PC-9 (cell line): ENCODE measurements at regions of chr12 and their contacts with region 1.

Region 1: GRCh38 chr12:12872139-12872881 is 19.1 kb upstream of the GPRC5A start:
- DNase-seq: peak; percentile 96 to 100
- H3K4me3 ChIP-seq: no peak overlapping the region
- H3K27ac ChIP-seq: peak overlapping the region; percentile 97
- H3K4me1 ChIP-seq: peaks cover 65% of the 10 kb centered on the region
- H3K27me3 ChIP-seq: no peaks in the 10 kb centered on the region
- CTCF ChIP-seq: no peak

Region 2: DNA sequence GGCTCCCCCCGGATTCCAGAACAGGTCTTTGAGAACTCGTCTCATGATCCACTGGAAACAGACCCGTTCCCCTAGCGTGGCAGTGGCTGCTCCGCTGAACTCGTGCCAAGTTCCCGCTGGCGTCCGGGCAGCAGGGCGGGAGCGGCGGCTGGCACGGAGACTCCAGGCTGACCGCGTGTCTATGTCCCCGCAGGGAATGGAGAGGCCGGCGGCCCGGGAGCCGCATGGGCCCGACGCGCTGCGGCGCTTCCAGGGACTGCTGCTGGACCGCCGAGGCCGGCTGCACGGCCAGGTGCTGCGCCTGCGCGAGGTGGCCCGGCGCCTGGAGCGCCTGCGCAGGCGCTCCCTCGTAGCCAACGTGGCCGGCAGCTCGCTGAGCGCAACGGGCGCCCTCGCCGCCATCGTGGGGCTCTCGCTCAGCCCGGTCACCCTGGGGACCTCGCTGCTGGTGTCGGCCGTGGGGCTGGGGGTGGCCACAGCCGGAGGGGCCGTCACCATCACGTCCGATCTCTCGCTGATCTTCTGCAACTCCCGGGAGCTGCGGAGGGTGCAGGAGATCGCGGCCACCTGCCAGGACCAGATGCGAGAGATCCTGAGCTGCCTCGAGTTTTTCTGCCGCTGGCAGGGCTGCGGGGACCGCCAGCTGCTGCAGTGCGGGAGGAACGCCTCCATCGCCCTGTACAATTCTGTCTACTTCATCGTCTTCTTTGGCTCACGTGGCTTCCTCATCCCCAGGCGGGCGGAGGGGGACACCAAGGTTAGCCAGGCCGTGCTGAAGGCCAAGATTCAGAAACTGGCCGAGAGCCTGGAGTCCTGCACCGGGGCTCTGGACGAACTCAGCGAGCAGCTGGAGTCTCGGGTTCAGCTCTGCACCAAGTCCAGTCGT is 85.4 kb before region 1 on chr12:
- CTCF ChIA-PET with region 1: no interaction called
- POLR2A ChIA-PET with region 1: interaction called, 5 read pairs
- intact Hi-C with region 1: loop called (anchors 1 kb)
- DNase-seq: peak; percentile 57 to 83
- H3K4me3 ChIP-seq: peak overlapping the region; percentile 61; the same call in 1 of the 2 replicates
- H3K27ac ChIP-seq: peak overlapping the region; percentile 76
- H3K4me1 ChIP-seq: peaks cover 44% of the 10 kb centered on the region
- H3K27me3 ChIP-seq: no peaks in the 10 kb centered on the region
- CTCF ChIP-seq: no peak

Region 3: DNA sequence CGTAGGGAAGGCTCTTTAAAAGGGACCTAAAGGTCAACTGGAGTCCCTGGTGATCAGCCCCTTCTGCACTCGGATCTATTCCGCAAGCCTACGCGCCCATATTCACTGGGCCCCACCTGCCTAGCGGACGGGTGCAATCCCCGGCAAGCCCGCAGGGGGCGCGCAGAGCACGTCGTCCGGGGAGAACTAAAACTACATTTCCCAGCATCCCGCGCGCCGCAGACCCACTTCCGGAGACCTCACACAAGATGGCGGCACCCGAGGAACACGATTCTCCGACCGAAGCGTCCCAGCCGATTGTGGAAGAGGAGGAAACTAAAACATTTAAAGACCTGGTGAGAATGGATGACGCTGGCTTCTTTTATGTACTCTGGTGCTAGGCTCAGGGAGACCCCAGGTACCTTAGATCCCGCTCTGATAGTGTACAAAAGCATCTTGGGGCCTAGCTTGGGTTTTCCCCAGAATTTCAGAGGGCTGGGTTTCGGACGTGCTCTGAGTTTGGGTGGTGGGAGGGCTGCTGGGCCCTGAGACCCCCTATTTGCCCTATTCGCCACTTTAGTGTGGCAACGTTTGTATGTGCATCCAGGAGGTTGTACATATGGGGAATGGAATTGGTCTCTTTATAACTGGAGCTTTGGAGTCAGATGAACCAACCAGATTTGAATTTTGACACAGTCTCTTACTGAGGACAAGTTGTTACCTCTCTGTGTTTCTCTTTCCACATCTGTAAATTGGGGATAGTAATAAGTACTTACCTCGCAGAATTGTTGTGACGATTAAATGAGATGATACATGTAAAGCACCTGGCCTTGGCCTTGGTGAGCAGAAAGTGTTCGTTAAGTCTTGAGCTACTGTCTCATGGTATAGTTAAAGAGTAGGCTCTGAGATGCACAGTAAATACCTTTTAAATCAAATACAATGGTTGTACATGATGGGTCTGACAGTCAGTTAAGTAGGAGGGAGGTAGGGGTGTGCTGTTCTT is 58.9 kb before region 1 on chr12 and contains the start of gene DDX47:
- CTCF ChIA-PET with region 1: interaction called, 9 read pairs
- POLR2A ChIA-PET with region 1: interaction called, 8 read pairs
- intact Hi-C with region 1: loop called (anchors 2 kb)
- DNase-seq: peak; percentile 81 to 98
- H3K4me3 ChIP-seq: peak within 1 kb of the TSS; percentile 67
- H3K27ac ChIP-seq: peak within 1 kb of the TSS; percentile 81
- H3K4me1 ChIP-seq: peaks cover 64% of the 10 kb centered on the region
- H3K27me3 ChIP-seq: no peaks in the 10 kb centered on the region
- CTCF ChIP-seq: peak; percentile 93
- total RNA-seq, gene DDX47: 192 and 196 TPM in 2 replicates

Region 4: GRCh38 chr12:12819671-12820311 is 52.5 kb before region 1 on chr12:
- CTCF ChIA-PET with region 1: no interaction called
- POLR2A ChIA-PET with region 1: interaction called, 17 read pairs
- intact Hi-C with region 1: loop called (anchors 1 kb)
- DNase-seq: peak; percentile 86 to 99
- H3K4me3 ChIP-seq: peak overlapping the region; percentile 29
- H3K27ac ChIP-seq: peak overlapping the region; percentile 94
- H3K4me1 ChIP-seq: peaks cover 100% of the 10 kb centered on the region
- H3K27me3 ChIP-seq: no peaks in the 10 kb centered on the region
- CTCF ChIP-seq: no peak

Region 5: GRCh38 chr12:12883369-12884001 is 11.2 kb after region 1 on chr12:
- CTCF ChIA-PET with region 1: interaction called, 3 read pairs
- POLR2A ChIA-PET with region 1: interaction called, 5 read pairs
- intact Hi-C with region 1: loop called (anchors 1 kb)
- DNase-seq: peak; percentile 74 to 99
- H3K4me3 ChIP-seq: peak overlapping the region; percentile 55; the same call in 1 of the 2 replicates
- H3K27ac ChIP-seq: peak overlapping the region; percentile 96
- H3K4me1 ChIP-seq: peaks cover 79% of the 10 kb centered on the region
- H3K27me3 ChIP-seq: no peaks in the 10 kb centered on the region
- CTCF ChIP-seq: no peak

Region 6: GRCh38 chr12:12899530-12900380 is 27.4 kb after region 1 on chr12:
- CTCF ChIA-PET with region 1: no interaction called
- POLR2A ChIA-PET with region 1: interaction called, 58 read pairs
- intact Hi-C with region 1: loop called (anchors 1 kb)
- DNase-seq: peak in 1 of 2 experiments; percentile 65
- H3K4me3 ChIP-seq: peak overlapping the region; percentile 17; the same call in 1 of the 2 replicates
- H3K27ac ChIP-seq: peak overlapping the region; percentile 76
- H3K4me1 ChIP-seq: peaks cover 89% of the 10 kb centered on the region
- H3K27me3 ChIP-seq: no peaks in the 10 kb centered on the region
- CTCF ChIP-seq: no peak

Region 7: GRCh38 chr12:13173012-13173932 is 301.0 kb after region 1 on chr12:
- CTCF ChIA-PET with region 1: no interaction called
- POLR2A ChIA-PET with region 1: interaction called, 4 read pairs
- intact Hi-C with region 1: loop called (anchors 5 kb)
- DNase-seq: peak; percentile 93 to 97
- H3K4me3 ChIP-seq: peak overlapping the region; percentile 37; the same call in 1 of the 2 replicates
- H3K27ac ChIP-seq: peak overlapping the region; percentile 99
- H3K4me1 ChIP-seq: peaks cover 100% of the 10 kb centered on the region
- H3K27me3 ChIP-seq: no peaks in the 10 kb centered on the region
- CTCF ChIP-seq: no peak

Region 8: DNA sequence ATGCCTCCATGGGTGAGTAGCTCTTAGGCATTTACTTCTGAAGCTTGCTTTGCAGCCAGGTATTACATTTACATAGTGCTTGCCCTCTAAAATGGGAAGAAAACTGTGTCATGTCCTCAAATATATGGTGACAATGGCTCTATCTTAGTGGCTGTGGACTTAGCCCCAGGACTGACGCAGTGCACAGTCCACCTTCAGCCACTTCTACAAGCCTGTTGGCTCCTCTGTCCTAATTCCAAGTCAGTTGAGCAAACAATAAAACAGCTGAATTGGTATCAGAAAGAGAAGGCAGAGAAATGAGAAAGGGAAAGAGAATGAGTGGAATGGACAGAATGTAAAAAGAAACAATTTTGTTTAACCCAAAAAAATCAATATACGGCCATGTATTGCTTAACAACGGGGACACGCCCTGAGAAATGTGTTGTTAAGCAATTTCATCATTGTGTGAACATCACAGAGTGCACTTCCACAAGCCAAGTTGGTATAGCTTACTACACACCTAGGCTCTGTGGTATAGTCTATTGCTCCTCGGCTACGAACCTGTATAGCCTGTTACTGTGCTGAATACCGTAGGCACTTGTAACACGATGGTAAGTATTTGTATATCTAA is 1015.6 kb after region 1 on chr12:
- CTCF ChIA-PET with region 1: no interaction called
- POLR2A ChIA-PET with region 1: no interaction called
- intact Hi-C with region 1: no loop called
- DNase-seq: no peak
- H3K4me3 ChIP-seq: no peak overlapping the region
- H3K27ac ChIP-seq: no peak overlapping the region
- H3K4me1 ChIP-seq: no peaks in the 10 kb centered on the region
- H3K27me3 ChIP-seq: no peaks in the 10 kb centered on the region; the same call in 1 of the 2 replicates
- CTCF ChIP-seq: no peak

Region 9: GRCh38 chr12:14460212-14460841 is 1588.0 kb after region 1 on chr12:
- CTCF ChIA-PET with region 1: no interaction called
- POLR2A ChIA-PET with region 1: no interaction called
- intact Hi-C with region 1: no loop called
- DNase-seq: no peak
- H3K4me3 ChIP-seq: no peak overlapping the region
- H3K27ac ChIP-seq: no peak overlapping the region
- H3K4me1 ChIP-seq: no peaks in the 10 kb centered on the region
- H3K27me3 ChIP-seq: no peaks in the 10 kb centered on the region
- CTCF ChIP-seq: no peak